ENCODE measurements at regions of chr7 and their contacts with region 1.

Region 1: GRCh38 chr7:149125863-149126661 is at the start of gene ZNF425:
- DNase-seq: peak; percentile 89 to 98 (median 95)
- ATAC-seq: peak; percentile 86
- H3K4me3 ChIP-seq: peak within 1 kb of the TSS; percentile 99
- H3K4me3 Mint-ChIP-seq: peak within 1 kb of the TSS; percentile 100
- H3K27ac ChIP-seq: peak within 1 kb of the TSS; percentile 86 to 88
- H3K27ac Mint-ChIP-seq: peak within 1 kb of the TSS; percentile 98
- H3K4me1 ChIP-seq: peaks cover 18% of the 10 kb centered on the region
- H3K4me1 Mint-ChIP-seq: peaks cover 28% of the 10 kb centered on the region
- H3K27me3 ChIP-seq: no peaks in the 10 kb centered on the region
- H3K27me3 Mint-ChIP-seq: no peaks in the 10 kb centered on the region
- CTCF ChIP-seq: peak; percentile 83
- total RNA-seq, gene ZNF425: 0.52 to 0.56 TPM

Region 2: DNA sequence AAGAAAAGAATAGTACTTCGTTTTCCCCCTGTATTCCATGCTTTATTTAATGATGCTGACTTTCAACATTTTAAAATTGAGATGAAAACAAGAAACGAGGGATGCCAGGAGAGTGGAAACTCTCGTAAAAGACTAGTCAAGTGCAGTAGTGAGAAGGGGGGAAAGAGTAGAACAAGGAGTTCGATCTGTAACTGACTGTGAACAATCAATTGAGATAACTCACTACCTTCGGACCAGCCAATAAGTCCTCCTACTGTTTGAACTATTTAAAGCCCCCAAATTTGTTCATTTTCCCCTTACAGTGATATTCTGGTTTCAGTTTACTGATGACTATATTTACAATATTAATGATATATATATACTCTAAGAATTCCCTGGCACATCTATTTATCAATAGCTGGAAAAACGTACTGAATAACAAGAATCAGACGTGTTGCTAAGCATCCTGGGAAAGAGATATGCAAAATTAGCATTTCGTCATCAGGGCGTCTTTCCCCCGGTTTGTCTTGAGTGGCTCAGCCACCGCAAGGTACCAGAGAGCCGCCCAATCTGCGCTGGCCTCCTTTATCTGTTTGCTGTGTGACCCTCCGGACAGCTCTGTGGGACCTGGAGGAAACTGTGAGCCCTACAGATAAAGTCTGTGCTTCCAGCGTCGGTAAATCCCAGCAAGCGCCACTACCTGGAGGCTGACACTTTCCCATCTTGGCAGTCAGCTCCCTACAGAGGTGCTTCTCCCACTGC is 138.9 kb before region 1 on chr7:
- CTCF ChIA-PET with region 1: interaction called, 3 read pairs
- POLR2A ChIA-PET with region 1: no interaction called
- intact Hi-C with region 1: loop called in 1 of 2 experiments (anchors 2 kb)
- DNase-seq: peak; percentile 43 to 93 (median 80)
- ATAC-seq: peak; percentile 76
- H3K4me3 ChIP-seq: peak overlapping the region; percentile 82 to 97
- H3K4me3 Mint-ChIP-seq: peak overlapping the region; percentile 96
- H3K27ac ChIP-seq: peak overlapping the region; percentile 74 to 93
- H3K27ac Mint-ChIP-seq: peak overlapping the region; percentile 96
- H3K4me1 ChIP-seq: peaks cover 41% of the 10 kb centered on the region
- H3K4me1 Mint-ChIP-seq: peaks cover 52% of the 10 kb centered on the region
- H3K27me3 ChIP-seq: no peaks in the 10 kb centered on the region
- H3K27me3 Mint-ChIP-seq: no peaks in the 10 kb centered on the region
- CTCF ChIP-seq: no peak

Region 3: DNA sequence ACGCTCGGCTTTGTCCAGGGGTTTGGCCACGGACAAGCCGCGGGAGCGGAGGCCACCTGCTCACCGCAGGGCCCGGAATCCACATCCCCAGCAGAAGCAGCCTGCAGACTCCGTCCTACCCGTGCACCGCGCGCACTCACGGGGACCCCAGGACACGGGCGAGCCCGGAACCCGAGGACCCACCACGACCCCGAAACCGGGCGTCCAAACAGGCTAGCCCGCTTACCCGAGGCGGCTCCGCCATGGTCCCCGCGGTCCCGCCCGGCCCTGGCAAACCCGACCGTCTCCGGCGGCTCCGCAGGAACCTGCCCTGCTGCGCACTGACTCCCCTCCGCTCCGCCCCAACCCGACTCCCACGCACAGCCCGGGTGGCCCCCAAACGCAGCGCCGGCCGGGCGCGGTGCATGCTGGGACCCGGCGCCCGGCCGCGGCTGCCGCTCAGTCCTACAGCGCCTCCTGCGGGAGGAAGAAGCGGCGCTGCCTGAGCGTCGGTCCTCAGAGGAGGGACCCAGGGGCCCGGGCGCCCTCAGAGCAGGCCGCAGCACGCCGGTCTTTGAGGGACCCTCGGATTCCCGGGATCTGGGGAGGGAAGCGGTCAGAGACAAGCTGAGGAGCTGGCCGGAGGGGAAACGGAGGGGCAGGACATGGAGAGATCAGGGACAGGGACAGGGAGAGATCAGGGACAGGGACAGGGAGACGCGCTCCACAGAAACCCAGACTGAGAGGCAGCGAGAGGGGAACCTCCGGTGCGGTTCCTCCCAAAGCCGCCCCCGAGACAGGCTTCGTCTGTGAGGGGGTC is 35.5 kb before region 1 on chr7 and contains the start of gene ZNF786:
- CTCF ChIA-PET with region 1: interaction called, 4 read pairs
- POLR2A ChIA-PET with region 1: interaction called, 7 read pairs
- intact Hi-C with region 1: loop called (anchors 1 kb)
- DNase-seq: peak; percentile 86 to 97 (median 93)
- ATAC-seq: peak; percentile 85
- H3K4me3 ChIP-seq: peak within 1 kb of the TSS; percentile 83 to 98
- H3K4me3 Mint-ChIP-seq: peak within 1 kb of the TSS; percentile 99
- H3K27ac ChIP-seq: peak within 1 kb of the TSS; percentile 90 to 95
- H3K27ac Mint-ChIP-seq: peak within 1 kb of the TSS; percentile 100
- H3K4me1 ChIP-seq: peaks cover 31% of the 10 kb centered on the region
- H3K4me1 Mint-ChIP-seq: peaks cover 27% of the 10 kb centered on the region
- H3K27me3 ChIP-seq: no peaks in the 10 kb centered on the region
- H3K27me3 Mint-ChIP-seq: no peaks in the 10 kb centered on the region
- CTCF ChIP-seq: peak; percentile 90
- total RNA-seq, gene ZNF786: 4.7 to 5.7 TPM

Region 4: DNA sequence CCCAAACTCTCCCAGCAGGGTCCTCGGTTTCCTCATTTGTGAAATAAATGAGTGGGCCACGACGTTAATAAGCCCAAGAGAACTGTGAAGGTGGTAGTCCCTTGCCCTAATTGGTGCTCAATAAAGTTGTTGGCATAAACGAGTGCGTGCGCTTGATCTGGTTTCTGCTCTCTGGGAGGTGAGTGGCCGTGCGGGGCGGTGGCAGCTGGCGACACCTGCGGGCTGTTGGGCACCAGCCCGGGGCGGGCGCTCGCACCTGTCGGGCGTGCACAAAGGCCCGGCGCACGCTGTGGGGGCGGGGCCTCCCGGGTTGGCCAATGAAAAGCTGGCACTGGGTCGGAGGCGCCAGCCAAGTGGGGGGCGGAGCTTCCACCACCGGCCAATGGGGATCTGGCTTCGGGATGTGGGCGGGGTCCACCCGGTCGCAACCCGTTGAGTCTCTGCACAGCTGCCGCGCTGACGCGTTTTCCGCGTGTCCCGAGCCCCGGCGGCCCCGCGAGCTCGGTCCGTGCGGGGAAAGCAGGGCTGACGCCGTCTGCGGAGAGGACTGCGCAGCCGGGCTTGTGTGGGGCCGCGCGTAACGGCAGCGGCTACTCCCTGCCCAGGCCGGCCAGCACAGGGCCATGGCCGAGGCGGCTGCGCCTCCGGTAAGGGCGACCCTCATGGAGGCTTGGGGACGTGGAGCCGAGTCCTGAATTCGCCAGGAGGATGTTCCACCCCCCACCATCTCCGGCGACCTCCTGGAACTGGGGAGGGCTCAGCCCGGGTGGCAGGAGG is 159.0 kb after region 1 on chr7:
- CTCF ChIA-PET with region 1: no interaction called
- POLR2A ChIA-PET with region 1: interaction called, 3 read pairs
- intact Hi-C with region 1: loop called in 1 of 2 experiments (anchors 1 kb)
- DNase-seq: peak; percentile 96 to 99 (median 98)
- ATAC-seq: peak; percentile 96
- H3K4me3 ChIP-seq: peak overlapping the region; percentile 45 to 65
- H3K4me3 Mint-ChIP-seq: peak overlapping the region; percentile 84
- H3K27ac ChIP-seq: peak overlapping the region; percentile 36 to 42
- H3K27ac Mint-ChIP-seq: peak overlapping the region; percentile 91
- H3K4me1 ChIP-seq: peaks cover 39% of the 10 kb centered on the region
- H3K4me1 Mint-ChIP-seq: peaks cover 42% of the 10 kb centered on the region
- H3K27me3 ChIP-seq: no peaks in the 10 kb centered on the region
- H3K27me3 Mint-ChIP-seq: no peaks in the 10 kb centered on the region
- CTCF ChIP-seq: no peak

Region 5: DNA sequence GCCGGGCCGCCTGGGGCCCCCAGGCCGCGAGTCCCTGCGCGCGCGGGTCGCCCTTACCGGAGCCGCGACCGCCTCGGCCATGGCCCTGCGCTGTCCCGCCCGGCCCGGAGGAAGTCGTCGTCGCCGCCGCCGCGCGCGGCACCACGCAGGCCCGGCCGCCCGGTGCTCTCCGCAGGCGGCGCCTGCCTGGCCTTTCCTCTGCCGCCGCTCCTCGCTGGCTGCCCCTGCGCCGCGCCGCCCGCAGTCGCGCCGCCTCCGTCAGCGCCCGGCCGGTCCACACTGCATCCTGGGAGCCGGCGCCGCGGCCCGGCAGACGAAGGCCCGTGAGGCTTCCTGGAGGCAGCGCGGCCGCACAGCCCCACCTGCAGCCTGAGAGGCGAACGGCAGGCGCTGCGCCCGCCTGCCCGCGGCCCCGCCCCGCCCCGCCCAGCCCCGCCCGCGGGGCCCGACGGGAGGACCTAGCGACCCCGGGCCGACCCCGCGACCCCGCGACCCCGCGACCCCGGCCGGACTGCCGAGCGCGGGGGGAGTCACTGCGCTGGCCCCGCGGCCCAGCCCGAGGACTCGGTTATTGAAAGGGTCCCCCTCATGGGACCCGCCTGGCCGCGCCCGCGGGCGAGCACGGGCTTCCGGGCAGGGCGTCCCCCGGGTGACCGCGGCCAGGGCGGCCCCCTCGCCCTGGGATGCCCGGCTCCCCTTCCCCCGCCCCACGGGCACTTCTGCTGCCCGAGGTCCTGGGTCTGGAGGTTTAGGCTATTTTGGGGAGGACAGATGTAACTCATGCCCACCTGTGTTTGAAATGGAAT is 371.6 kb after region 1 on chr7 and contains the start of gene ZNF746:
- CTCF ChIA-PET with region 1: no interaction called
- POLR2A ChIA-PET with region 1: no interaction called
- intact Hi-C with region 1: loop called (anchors 1 kb)
- DNase-seq: peak; percentile 59 to 91 (median 78)
- ATAC-seq: peak; percentile 93
- H3K4me3 ChIP-seq: peak within 1 kb of the TSS; percentile 56 to 71
- H3K4me3 Mint-ChIP-seq: peak within 1 kb of the TSS; percentile 95
- H3K27ac ChIP-seq: peak within 1 kb of the TSS; percentile 40 to 51
- H3K27ac Mint-ChIP-seq: peak within 1 kb of the TSS; percentile 94
- H3K4me1 ChIP-seq: peaks cover 19% of the 10 kb centered on the region
- H3K4me1 Mint-ChIP-seq: peaks cover 32% of the 10 kb centered on the region
- H3K27me3 ChIP-seq: no peaks in the 10 kb centered on the region
- H3K27me3 Mint-ChIP-seq: no peaks in the 10 kb centered on the region
- CTCF ChIP-seq: peak; percentile 33
- total RNA-seq, gene ZNF746: 28.4 to 31.1 TPM